ENCODE measurements at regions of chr12 and their contacts with region 1.

Region 1: GRCh38 chr12:57452937-57453509 is 2.1 kb upstream of the INHBE start:
- DNase-seq: peak; percentile 90
- ATAC-seq: peak; percentile 78

Region 2: GRCh38 chr12:55572168-55572567 is 1880.9 kb before region 1 on chr12 and contains the start of gene OR2AP1:
- intact Hi-C with region 1: no loop called
- DNase-seq: no peak
- ATAC-seq: no peak
- total RNA-seq, gene OR2AP1: not detected

Region 3: DNA sequence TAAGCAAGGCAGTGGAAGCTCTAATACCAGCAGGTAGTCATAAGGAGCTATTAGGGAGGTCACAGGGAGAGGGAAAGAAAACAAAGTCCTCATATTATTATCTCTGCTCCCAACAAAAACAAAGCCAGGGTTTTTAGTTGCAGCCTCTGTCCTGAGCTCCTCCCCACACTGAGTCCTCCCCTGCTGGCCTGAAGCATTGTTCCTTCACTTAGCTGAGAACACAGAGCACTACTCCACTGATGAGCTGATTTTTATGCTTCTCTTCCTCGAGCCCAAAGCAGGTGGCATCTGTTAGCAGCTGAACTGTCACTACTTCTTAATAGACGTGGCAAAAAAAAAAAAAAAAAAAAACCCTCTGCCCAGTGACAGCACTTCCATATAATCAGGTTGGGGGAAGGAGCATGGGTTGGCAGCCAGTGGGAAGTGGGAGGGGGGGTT is 191.6 kb before region 1 on chr12:
- intact Hi-C with region 1: loop called (anchors 5 kb)
- DNase-seq: no peak
- ATAC-seq: no peak

Region 4: GRCh38 chr12:57309420-57309819 is 143.6 kb before region 1 on chr12:
- intact Hi-C with region 1: loop called (anchors 5 kb)
- DNase-seq: no peak
- ATAC-seq: no peak